ENCODE measurements at regions of chr14 and their contacts with region 1.

Region 1: DNA sequence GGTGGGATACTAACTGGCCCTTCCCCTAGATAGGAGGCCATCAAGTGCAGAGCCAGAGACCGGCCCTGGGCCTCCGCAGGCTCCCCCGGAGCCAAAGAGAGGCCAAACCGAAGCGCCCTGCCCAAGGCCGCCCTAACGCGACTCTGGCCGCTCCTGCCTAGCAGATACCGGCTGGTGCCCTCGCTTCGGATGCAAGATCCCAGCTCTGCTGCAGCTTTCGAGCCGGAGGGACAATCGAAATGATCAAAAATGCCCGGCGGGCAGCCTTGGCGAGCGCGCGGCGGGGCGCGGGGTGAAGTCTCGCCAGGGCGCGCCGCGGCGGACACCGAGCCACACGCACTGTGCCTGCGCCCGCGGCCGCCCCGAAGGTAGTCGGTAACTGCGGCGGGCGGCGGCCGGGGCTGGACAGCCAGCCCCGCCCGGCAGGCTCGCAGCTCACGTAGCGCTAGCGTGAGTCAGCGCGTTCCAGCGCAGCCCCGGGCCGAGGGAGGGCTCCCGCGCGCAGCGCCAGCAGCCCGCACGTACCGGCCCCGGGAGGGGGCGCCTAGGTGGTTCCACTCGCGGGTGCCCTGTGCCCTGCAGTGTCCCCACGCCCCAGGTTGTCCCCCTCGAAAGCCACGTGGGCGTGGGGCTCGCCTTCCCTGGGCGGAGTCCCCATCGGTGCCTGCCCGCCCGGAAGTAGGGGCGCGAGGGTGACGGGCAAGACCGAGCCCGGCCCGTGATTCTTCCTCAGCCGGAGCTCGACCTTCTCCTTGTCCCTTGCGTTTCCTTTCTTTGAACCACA is 109.2 kb upstream of the EGLN3 start:
- DNase-seq: peak; percentile 86
- ATAC-seq: peak; percentile 96 to 98

Region 2: DNA sequence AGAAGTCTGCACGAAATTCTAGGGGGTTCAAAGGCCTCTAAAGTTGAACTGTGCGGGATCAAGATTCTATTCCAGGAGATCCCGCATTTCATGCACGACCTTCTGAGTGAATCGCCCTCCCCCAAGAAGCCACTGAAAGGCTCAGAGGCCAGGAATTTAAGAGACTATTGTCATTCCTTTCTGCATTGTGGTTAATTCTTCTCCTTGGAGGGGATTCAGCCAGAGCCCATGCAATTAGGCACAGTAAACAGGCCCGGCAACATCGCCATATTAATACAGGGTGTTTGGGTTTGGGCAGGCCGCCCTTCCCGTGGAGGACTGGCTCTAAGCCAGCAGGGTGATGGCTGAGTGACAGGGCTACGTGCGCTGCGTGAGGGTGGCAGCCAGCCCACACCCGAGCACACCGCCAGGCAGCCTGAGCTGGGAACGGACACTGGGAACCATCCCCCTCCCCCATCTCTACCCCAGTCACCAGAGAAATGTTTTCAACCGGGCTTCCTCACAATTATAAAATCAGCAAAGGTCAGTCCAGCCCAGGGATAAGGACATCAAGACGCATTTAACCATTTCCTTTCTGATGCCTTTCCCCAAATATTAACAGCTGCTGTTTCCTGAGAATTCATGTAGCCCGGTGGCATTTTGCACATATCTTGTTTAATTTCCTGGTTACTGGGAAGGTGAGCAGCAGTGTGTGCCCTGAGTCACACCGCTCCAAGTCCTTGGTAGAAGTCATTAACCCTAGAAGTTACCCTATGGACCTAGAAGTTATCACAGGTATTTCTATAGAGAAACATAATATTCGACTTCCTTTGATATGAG is 121.7 kb before region 1 on chr14:
- intact Hi-C with region 1: loop called in 1 of 2 experiments (anchors 5 kb)
- DNase-seq: peak; percentile 81
- ATAC-seq: peak; percentile 94 to 96

Region 3: DNA sequence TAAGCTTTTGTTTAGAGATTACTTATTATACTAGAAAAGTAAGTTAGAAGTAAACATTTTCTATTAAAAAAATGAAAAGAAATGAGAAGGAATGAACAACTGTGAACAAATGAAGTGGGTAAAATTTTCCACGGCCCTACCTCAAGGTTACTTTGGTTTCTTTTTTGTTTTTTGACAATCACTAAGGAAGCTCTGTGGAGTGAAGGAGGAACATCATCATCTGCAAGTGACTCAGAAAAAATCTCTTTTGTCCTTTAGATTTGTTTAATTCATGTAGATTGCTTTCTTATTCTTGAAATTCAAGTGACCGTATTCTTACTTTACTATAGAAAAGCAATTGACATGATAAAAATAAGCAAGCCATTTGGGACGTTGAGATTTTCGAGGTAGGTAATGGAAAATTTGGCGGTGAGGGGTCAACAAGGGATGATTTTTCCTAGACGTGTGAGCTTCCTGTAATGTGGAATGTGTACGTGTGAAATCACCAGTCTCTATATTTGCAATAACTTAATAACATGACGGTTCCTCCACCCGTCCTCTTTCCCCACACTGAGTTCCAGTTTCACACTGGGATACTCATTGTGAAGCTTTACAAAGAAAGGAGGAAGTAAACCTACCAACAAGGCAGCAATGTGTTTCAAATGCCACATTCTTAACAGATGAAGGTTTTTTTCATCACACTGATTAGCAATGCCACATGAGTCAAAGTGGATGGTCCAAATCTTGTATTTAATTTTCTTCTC is 46.9 kb before region 1 on chr14:
- intact Hi-C with region 1: no loop called
- DNase-seq: no peak
- ATAC-seq: peak in 1 of 2 donors; percentile 42

Region 4: DNA sequence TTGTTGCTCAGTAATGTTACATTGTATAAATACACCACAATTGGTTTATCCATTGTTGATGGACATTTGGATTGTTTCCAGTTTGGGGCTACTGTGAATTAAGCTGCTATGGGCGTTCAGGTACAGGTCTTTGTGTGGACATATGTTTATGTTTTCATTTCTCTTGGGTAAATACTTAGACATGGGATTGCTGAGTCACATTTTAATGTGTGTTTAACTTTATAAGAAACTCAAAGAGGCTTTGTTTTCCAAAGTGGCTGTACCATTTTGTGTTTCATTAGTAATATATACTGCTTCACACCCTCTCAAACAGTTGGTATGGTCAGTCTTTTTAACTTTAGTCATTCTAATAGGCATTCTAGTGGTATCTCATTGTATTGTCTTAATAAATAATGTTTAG is 177.0 kb after region 1 on chr14:
- intact Hi-C with region 1: loop called in 1 of 2 experiments (anchors 10 kb)
- DNase-seq: no peak
- ATAC-seq: no peak

Measured in left cardiac atrium (tissue), 4 donors.